ENCODE measurements at regions of chr1 and their contacts with region 1.

Region 1: GRCh38 chr1:115595279-115596079 is 46.3 kb upstream of the VANGL1 start:
- DNase-seq: peak; percentile 74
- H3K4me3 ChIP-seq: peak overlapping the region in 1 of 2 experiments; percentile 12; a peak in 1 of 4 replicates
- H3K27ac ChIP-seq: no peak overlapping the region
- H3K4me1 ChIP-seq: peaks cover 4% of the 10 kb centered on the region in 2 experiments; a peak in 2 of 4 replicates
- H3K27me3 ChIP-seq: no peaks in the 10 kb centered on the region
- CTCF ChIP-seq: peak; percentile 98
- EP300 ChIP-seq: peak in 1 of 2 experiments; percentile 8; a peak in 1 of 4 replicates
- RAD21 ChIP-seq: peak; percentile 98

Region 2: DNA sequence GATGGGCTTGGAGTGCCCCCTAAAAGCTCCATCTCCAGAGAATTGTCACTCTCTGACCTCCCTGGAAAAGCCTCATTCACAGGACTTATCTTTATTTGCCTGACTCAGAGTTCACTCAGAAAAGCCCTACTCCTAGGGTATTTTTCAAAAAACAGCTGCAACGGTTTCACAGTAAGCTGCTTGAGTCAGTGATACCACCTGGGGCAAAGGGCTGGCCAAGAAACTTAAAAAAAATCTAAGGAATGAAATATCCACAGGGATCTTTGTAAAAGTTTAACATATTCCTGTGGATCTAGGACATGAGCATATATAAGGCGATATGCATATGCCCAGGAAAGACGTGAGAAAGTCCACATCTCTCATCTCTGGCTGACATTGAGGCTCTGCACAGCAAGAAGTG is 472.4 kb before region 1 on chr1:
- CTCF ChIA-PET with region 1: interaction called, 13 read pairs
- POLR2A ChIA-PET with region 1: no interaction called
- DNase-seq: no peak
- H3K4me3 ChIP-seq: no peak overlapping the region
- H3K27ac ChIP-seq: no peak overlapping the region
- H3K4me1 ChIP-seq: no peaks in the 10 kb centered on the region
- H3K27me3 ChIP-seq: no peaks in the 10 kb centered on the region
- CTCF ChIP-seq: no peak
- EP300 ChIP-seq: no peak
- RAD21 ChIP-seq: no peak

Region 3: DNA sequence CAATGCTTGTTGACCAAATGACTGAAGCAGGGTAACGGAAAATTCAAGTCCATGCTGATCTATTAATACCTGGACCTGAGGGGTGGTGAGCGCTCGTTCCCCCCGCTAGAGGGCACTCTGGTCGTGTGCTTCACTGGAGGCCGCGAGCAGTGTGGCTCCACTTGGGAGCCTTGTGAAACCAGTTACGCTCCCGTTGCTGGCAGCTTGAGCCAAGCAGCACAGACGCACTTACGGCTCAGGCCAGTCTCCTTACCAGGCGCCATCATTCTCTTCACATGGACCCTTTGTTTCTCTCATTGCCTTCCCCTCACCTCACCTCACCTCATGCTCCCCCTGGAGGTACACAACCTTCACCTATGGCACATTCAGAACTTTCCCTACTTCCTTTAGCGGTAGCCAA is 456.5 kb before region 1 on chr1:
- CTCF ChIA-PET with region 1: interaction called, 202 read pairs
- POLR2A ChIA-PET with region 1: no interaction called
- DNase-seq: peak; percentile 87
- H3K4me3 ChIP-seq: no peak overlapping the region; a peak in 1 of 4 replicates
- H3K27ac ChIP-seq: peak overlapping the region; percentile 16 to 60; a peak in 3 of 4 replicates
- H3K4me1 ChIP-seq: peaks cover 5 to 20% of the 10 kb centered on the region in 2 experiments; a peak in 2 of 4 replicates
- H3K27me3 ChIP-seq: no peaks in the 10 kb centered on the region
- CTCF ChIP-seq: peak; percentile 93
- EP300 ChIP-seq: no peak
- RAD21 ChIP-seq: peak; percentile 99

Region 4: GRCh38 chr1:115476616-115477015 is 118.9 kb before region 1 on chr1:
- CTCF ChIA-PET with region 1: interaction called, 14 read pairs
- POLR2A ChIA-PET with region 1: no interaction called
- DNase-seq: no peak
- H3K4me3 ChIP-seq: no peak overlapping the region
- H3K27ac ChIP-seq: no peak overlapping the region
- H3K4me1 ChIP-seq: peaks cover 0 to 7% of the 10 kb centered on the region in 2 experiments; a peak in 1 of 4 replicates
- H3K27me3 ChIP-seq: no peaks in the 10 kb centered on the region
- CTCF ChIP-seq: peak; percentile 22
- EP300 ChIP-seq: no peak
- RAD21 ChIP-seq: peak; percentile 43

Region 5: DNA sequence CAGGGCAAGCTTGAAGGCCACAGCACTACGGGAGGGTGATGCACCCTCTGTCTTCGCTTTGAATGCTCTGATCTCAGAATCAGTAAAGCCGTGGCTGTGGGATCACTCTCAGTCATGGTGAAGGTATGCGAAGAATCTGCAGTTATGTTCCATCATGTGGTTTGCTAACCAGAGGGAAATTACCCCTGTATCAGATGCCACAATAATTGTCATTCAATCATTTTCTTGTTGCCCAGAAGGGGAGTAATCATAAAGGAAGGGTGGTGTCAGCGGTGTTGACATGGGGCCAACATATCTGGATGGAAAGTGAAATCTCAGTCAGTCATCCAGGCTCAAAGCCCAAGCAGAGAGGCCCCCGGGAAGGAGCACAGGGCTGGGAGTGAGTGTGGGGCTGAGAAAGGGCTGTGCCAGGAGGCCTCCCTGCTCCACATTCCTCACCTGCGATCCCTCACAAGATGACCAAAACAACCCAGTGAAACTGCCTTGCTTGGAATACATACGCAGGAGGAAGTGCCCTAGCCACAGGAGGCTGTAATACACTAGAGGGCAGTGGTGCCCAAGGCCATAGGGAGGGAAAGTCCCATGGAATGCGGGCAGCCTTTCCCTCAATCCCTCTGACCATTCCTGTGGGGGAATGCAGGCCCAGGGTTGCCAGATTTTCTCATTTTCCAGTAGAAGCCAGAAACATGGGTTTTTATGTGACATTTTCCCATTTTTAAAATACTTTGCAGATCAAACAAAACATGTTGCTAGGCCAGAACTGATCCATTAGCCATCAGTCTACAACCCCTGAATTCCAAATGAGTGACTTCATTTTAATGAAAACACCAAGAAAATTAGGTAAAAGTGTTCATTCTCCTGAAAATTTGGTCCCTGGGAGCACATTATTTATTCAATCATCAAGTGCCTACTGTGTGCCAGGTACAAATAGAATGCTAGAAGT is 49.4 kb before region 1 on chr1:
- CTCF ChIA-PET with region 1: interaction called, 13 read pairs
- POLR2A ChIA-PET with region 1: no interaction called
- DNase-seq: peak; percentile 55
- H3K4me3 ChIP-seq: peak overlapping the region in 1 of 2 experiments; percentile 33; a peak in 1 of 4 replicates
- H3K27ac ChIP-seq: peak overlapping the region; percentile 67 to 93; a peak in 3 of 4 replicates
- H3K4me1 ChIP-seq: peaks cover 0 to 13% of the 10 kb centered on the region in 2 experiments; a peak in 3 of 4 replicates
- H3K27me3 ChIP-seq: no peaks in the 10 kb centered on the region
- CTCF ChIP-seq: peak; percentile 80
- EP300 ChIP-seq: peak; percentile 30 to 87; a peak in 2 of 4 replicates
- RAD21 ChIP-seq: peak; percentile 76

Region 6: DNA sequence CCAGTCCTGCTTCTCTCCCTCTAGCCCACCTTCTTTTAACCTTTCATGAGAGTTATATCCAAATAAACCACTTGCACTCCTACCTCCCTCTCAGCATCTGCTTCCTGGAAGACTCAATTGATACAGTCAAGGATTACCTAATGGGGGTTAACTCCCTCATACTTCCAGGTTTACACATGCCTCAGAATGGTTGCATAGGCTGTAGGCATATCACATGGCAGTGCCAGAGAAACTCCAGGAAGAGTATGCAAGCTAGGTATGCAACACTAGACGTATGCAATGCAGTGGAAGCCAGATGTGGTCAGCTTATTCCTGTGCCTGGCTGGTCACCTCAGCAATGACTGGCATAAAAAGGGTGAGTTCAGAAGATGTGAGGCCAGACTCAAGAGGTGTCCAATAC is 13.5 kb after region 1 on chr1:
- CTCF ChIA-PET with region 1: interaction called, 42 read pairs
- POLR2A ChIA-PET with region 1: no interaction called
- DNase-seq: no peak
- H3K4me3 ChIP-seq: no peak overlapping the region
- H3K27ac ChIP-seq: no peak overlapping the region
- H3K4me1 ChIP-seq: no peaks in the 10 kb centered on the region
- H3K27me3 ChIP-seq: peaks cover 16% of the 10 kb centered on the region; the same call in 1 of the 2 replicates
- CTCF ChIP-seq: no peak
- EP300 ChIP-seq: no peak
- RAD21 ChIP-seq: no peak

Region 7: DNA sequence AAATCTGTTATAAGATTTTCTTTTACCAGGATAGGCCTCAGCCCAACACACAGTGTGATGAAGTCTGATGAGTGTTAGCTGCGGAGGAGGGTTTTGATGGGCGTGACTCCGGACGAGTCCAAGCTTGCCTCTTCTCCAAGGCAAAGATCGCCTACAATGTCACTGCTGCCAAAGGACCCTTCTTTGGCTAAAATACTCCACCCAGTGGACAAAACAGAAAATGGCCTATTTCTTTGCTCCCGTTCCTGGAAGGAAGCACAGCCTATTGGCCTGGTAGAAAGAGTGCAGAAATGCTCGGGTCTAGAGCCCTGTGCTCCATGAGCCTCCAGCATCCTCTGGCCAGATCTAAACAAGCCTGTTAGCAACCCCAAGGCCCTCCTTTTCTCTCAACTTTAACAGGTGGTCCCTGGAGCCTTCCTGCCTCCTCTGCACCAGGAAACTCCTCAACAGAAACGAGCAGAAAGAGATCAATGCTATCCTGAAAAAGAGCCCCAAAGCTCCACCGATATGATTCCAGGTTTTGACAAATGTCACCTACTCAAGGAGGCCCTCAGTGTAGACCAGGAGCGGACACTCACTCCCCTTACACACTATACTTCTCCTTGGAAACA is 176.5 kb after region 1 on chr1:
- CTCF ChIA-PET with region 1: interaction called, 11 read pairs
- POLR2A ChIA-PET with region 1: no interaction called
- DNase-seq: peak; percentile 68
- H3K4me3 ChIP-seq: no peak overlapping the region; a peak in 1 of 4 replicates
- H3K27ac ChIP-seq: no peak overlapping the region
- H3K4me1 ChIP-seq: peaks cover 0 to 4% of the 10 kb centered on the region in 2 experiments; a peak in 1 of 4 replicates
- H3K27me3 ChIP-seq: no peaks in the 10 kb centered on the region; the same call in 1 of the 2 replicates
- CTCF ChIP-seq: peak; percentile 74
- EP300 ChIP-seq: no peak
- RAD21 ChIP-seq: peak; percentile 93